ENCODE measurements at regions of chr11 and their contacts with region 1.

Region 1: DNA sequence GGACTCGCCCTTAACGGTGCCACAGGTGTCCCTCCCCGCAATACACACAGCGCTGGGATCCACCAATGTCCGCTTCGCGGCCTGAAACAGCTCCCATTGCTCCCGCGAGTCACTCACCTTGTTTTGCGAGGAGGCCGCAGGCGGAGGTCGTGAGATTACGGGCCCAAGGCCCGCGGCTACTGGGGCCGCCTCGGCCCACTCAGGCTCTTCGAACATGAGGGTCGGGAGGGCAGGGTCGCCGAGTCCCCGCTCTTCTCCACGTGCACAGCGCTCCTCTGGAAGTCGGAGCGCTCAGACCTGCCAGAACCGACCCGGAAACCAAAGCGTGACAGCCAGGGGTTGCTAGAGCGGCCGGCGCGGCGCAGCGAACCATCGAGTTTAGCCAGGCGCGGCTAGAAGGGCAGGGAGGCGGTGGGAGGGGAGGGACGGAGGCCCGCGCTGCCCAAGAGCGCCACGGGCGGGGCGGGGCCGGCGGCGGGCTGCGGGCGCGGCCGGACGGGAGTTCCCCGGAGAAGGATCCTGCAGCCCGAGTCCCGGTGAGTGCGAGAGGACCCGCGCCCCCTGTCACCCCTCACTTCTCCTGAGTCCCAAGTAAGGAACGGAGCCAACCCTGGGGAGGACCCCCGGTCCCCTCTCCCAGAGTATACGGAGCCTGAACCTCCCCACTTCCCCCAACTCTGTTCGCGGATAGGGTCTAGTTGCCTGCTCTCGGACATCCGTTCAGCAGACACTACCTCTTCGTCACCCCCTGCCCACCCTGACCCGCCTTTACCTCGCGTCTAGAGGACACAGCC is at the starts of genes ILK and RRP8:
- DNase-seq: peak; percentile 93
- H3K4me3 ChIP-seq: peak within 1 kb of the TSS; percentile 62 to 97 (median 90)
- H3K27ac ChIP-seq: peak within 1 kb of the TSS; percentile 83
- H3K4me1 ChIP-seq: peaks cover 44% of the 10 kb centered on the region
- H3K27me3 ChIP-seq: no peaks in the 10 kb centered on the region
- CTCF ChIP-seq: no peak
- POLR2A ChIP-seq: peak; percentile 87
- total RNA-seq, gene ILK: 221 and 233 TPM in 2 replicates
- total RNA-seq, gene RRP8: 19.4 and 23.3 TPM in 2 replicates

Region 2: GRCh38 chr11:6096427-6096826 is 507.1 kb before region 1 on chr11:
- CTCF ChIA-PET with region 1: no interaction called
- POLR2A ChIA-PET with region 1: no interaction called
- dilution Hi-C with region 1: no loop called
- intact Hi-C with region 1: no loop called
- DNase-seq: peak; percentile 40
- H3K4me3 ChIP-seq: no peak overlapping the region
- H3K27ac ChIP-seq: no peak overlapping the region
- H3K4me1 ChIP-seq: peaks cover 5% of the 10 kb centered on the region
- H3K27me3 ChIP-seq: peaks cover 0 to 25% of the 10 kb centered on the region in 2 experiments
- CTCF ChIP-seq: no peak
- POLR2A ChIP-seq: no peak

Region 3: DNA sequence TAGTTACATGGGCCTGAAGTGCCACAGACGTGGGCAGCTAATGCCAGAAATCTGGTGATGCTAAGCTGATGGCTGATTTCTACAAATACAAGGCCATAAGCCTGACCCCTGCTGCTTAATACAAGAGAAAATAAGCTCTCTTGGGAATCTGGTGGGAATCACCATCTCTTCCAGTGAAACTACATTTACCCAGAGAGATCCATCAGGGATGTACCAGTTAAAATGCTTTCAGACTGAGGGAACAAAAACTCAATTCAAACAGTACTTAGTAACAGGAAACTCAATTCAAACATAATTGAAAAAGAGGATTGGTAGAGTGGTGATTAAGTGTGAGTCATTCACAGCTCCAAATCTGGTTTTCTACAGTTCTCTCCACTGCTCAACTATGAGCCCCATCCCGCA is 281.5 kb before region 1 on chr11:
- CTCF ChIA-PET with region 1: no interaction called
- POLR2A ChIA-PET with region 1: no interaction called
- dilution Hi-C with region 1: no loop called
- intact Hi-C with region 1: loop called (anchors 2 kb)
- DNase-seq: peak; percentile 68
- H3K4me3 ChIP-seq: no peak overlapping the region
- H3K27ac ChIP-seq: peak overlapping the region; percentile 83
- H3K4me1 ChIP-seq: peaks cover 48% of the 10 kb centered on the region
- H3K27me3 ChIP-seq: no peaks in the 10 kb centered on the region
- CTCF ChIP-seq: no peak
- POLR2A ChIP-seq: peak; percentile 65

Region 4: GRCh38 chr11:6576471-6577373 is 26.8 kb before region 1 on chr11:
- CTCF ChIA-PET with region 1: interaction called, 5 read pairs
- POLR2A ChIA-PET with region 1: no interaction called
- dilution Hi-C with region 1: no loop called
- intact Hi-C with region 1: loop called (anchors 1 kb)
- DNase-seq: peak; percentile 84
- H3K4me3 ChIP-seq: peak overlapping the region in 1 of 3 experiments; percentile 0
- H3K27ac ChIP-seq: peak overlapping the region; percentile 69
- H3K4me1 ChIP-seq: peaks cover 32% of the 10 kb centered on the region
- H3K27me3 ChIP-seq: no peaks in the 10 kb centered on the region
- CTCF ChIP-seq: no peak
- POLR2A ChIP-seq: no peak